Vagina (tissue), 2 donors: ENCODE measurements at regions of chr5 and their contacts with region 1.

Region 1: DNA sequence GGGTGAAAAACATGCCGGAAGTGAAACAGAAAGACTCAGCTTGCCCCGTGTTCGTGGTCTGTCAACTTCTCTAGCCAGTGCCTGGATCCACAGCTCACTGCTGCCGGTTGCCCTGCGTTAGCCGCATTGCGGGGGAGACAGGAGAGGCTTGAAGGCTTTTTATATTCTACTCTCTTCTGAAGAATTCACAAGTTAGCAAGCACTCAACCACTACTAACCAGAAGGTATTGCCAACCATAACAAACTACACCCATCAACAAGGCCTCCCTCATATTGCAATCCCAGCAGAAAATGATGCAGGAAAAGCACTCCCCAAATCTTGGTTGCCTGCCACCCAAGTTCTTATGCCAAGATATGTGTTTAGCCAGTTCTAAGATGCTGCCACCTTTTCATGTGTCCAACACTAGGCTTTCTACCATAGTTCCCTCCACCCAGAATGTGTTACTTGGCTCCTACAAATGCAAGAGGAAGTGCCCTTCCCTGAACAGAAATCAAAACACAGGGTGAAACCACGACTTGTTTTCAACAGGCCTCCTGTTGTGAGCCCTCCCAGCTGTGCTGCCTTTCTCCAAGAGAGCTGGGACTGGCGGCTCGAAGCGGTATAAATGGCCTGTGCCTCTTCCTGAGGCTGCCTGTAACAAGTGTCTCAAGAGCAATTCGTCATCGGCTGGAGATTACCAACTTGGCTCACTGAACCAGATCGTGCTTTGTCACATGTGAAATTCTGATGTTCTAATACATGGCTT is 129.0 kb downstream of the SNX18 start:
- DNase-seq: no peak
- H3K4me3 ChIP-seq: no peak overlapping the region
- H3K27ac ChIP-seq: peak overlapping the region; percentile 59
- H3K4me1 ChIP-seq: peaks cover 30% of the 10 kb centered on the region
- H3K27me3 ChIP-seq: no peaks in the 10 kb centered on the region
- CTCF ChIP-seq: no peak
- POLR2A ChIP-seq: no peak

Region 2: DNA sequence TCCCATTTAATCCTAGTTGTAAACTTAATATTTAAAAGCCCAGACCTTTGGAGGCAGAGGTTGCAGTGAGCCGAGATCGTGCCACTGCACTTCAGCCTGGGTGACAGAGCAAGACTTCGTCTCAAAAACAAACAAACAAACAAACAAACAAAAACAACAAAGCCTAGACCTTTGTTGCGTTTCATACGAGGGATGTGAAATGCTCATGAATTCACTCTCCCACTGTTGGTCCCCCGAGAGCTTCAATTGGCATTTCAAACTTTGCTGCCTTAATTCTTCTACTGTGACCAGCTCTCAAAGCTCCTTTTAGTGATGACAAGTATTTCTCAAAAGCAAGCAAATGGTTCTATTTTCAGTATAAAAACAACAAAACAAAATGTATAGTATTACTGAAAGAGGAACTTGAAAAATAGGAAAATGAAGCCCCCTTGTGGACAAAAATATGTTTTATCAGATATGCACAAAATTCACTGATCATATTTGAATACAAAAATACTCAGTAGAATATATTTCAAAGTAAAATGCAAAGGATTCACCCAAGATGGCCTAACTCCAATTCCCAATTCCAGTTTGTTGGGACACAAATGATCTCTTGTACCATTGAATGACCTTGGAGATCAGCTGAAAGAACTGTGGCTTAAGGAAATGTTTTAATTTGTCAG is 198.5 kb after region 1 on chr5:
- intact Hi-C with region 1: loop called (anchors 10 kb)
- DNase-seq: no peak
- H3K4me3 ChIP-seq: no peak overlapping the region
- H3K27ac ChIP-seq: peak overlapping the region; percentile 10
- H3K4me1 ChIP-seq: no peaks in the 10 kb centered on the region
- H3K27me3 ChIP-seq: no peaks in the 10 kb centered on the region
- CTCF ChIP-seq: peak; percentile 41 to 70 (median 49)
- POLR2A ChIP-seq: no peak